ENCODE measurements at regions of chr20 and their contacts with region 1.

Region 1: GRCh38 chr20:38472513-38473372 is at the start of gene RALGAPB:
- DNase-seq: peak; percentile 96 to 100 (median 98)
- ATAC-seq: peak; percentile 95
- H3K4me3 ChIP-seq: peak within 1 kb of the TSS; percentile 84
- H3K4me3 Mint-ChIP-seq: peak within 1 kb of the TSS; percentile 89
- H3K27ac ChIP-seq: peak within 1 kb of the TSS; percentile 37 to 81
- H3K27ac Mint-ChIP-seq: peak within 1 kb of the TSS; percentile 88
- H3K4me1 ChIP-seq: peaks cover 27% of the 10 kb centered on the region
- H3K4me1 Mint-ChIP-seq: peaks cover 58% of the 10 kb centered on the region
- H3K27me3 ChIP-seq: peaks cover 0 to 3% of the 10 kb centered on the region in 2 experiments
- H3K27me3 Mint-ChIP-seq: no peaks in the 10 kb centered on the region
- CTCF ChIP-seq: peak; percentile 61
- total RNA-seq, gene RALGAPB: 30.4 to 31.9 TPM

Region 2: GRCh38 chr20:37178839-37179670 is 1293.7 kb before region 1 on chr20 and contains the starts of genes MROH8 and RPN2:
- CTCF ChIA-PET with region 1: no interaction called
- POLR2A ChIA-PET with region 1: no interaction called
- intact Hi-C with region 1: loop called in 1 of 2 experiments (anchors 5 kb)
- DNase-seq: peak; percentile 87 to 96 (median 93)
- ATAC-seq: peak; percentile 92
- H3K4me3 ChIP-seq: peak within 1 kb of the TSS; percentile 80
- H3K4me3 Mint-ChIP-seq: peak within 1 kb of the TSS; percentile 99
- H3K27ac ChIP-seq: peak within 1 kb of the TSS; percentile 84 to 90
- H3K27ac Mint-ChIP-seq: peak within 1 kb of the TSS; percentile 88
- H3K4me1 ChIP-seq: peaks cover 40% of the 10 kb centered on the region
- H3K4me1 Mint-ChIP-seq: peaks cover 46% of the 10 kb centered on the region
- H3K27me3 ChIP-seq: no peaks in the 10 kb centered on the region
- H3K27me3 Mint-ChIP-seq: no peaks in the 10 kb centered on the region
- CTCF ChIP-seq: no peak
- total RNA-seq, gene MROH8: 1.1 to 1.2 TPM
- total RNA-seq, gene RPN2: 62.8 to 65.8 TPM

Region 3: GRCh38 chr20:38033310-38034107 is 439.2 kb before region 1 on chr20 and contains the starts of genes RPRD1B and TTI1:
- CTCF ChIA-PET with region 1: no interaction called
- POLR2A ChIA-PET with region 1: interaction called, 4 read pairs
- intact Hi-C with region 1: loop called in 1 of 2 experiments (anchors 5 kb)
- DNase-seq: peak; percentile 74 to 94 (median 84)
- ATAC-seq: peak; percentile 84
- H3K4me3 ChIP-seq: peak within 1 kb of the TSS; percentile 79
- H3K4me3 Mint-ChIP-seq: peak within 1 kb of the TSS; percentile 99
- H3K27ac ChIP-seq: peak within 1 kb of the TSS; percentile 92 to 98
- H3K27ac Mint-ChIP-seq: peak within 1 kb of the TSS; percentile 100
- H3K4me1 ChIP-seq: peaks cover 38% of the 10 kb centered on the region
- H3K4me1 Mint-ChIP-seq: peaks cover 85% of the 10 kb centered on the region
- H3K27me3 ChIP-seq: no peaks in the 10 kb centered on the region
- H3K27me3 Mint-ChIP-seq: no peaks in the 10 kb centered on the region
- CTCF ChIP-seq: no peak
- total RNA-seq, gene RPRD1B: 54.8 to 55.7 TPM
- total RNA-seq, gene TTI1: 10.6 to 11.4 TPM

Region 4: GRCh38 chr20:38229376-38230252 is 243.1 kb before region 1 on chr20:
- CTCF ChIA-PET with region 1: no interaction called
- POLR2A ChIA-PET with region 1: no interaction called
- intact Hi-C with region 1: no loop called
- DNase-seq: no peak
- ATAC-seq: no peak
- H3K4me3 ChIP-seq: no peak overlapping the region
- H3K4me3 Mint-ChIP-seq: no peak overlapping the region
- H3K27ac ChIP-seq: no peak overlapping the region
- H3K27ac Mint-ChIP-seq: no peak overlapping the region
- H3K4me1 ChIP-seq: no peaks in the 10 kb centered on the region
- H3K4me1 Mint-ChIP-seq: no peaks in the 10 kb centered on the region
- H3K27me3 ChIP-seq: peaks cover 0 to 3% of the 10 kb centered on the region in 2 experiments
- H3K27me3 Mint-ChIP-seq: peaks cover 8% of the 10 kb centered on the region
- CTCF ChIP-seq: no peak

Region 5: DNA sequence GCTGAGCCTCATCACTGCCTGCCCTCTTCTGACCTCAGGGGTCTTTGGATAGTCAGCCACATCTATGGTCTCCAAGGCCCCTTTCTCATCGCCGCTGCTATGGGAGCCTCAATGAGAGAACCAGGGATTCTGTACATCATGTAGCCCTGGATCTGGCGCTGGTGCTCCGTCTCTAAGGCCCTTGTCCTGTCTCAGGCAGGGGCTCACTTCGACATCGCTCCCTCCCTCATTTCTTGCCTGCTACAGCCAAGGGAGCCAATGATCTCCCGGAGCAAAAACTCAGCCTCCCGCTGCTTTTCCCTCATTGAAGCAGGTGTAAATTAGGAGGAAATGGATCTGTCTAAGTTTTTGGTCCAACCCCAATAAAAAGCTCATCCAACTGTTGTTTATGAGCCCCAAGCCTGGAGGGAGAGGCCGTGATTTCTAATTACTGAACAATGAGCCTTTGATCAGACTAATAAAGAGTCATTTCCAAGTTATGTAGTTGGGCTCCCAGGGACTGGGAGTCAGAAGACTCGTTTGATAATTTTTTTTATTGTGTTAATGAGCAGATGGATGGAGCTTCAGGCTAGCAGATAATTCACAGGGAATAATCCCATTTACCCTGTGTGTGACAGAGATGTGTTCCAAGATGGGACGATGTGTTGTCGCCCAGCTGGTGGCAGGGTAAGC is 95.6 kb before region 1 on chr20:
- CTCF ChIA-PET with region 1: no interaction called
- POLR2A ChIA-PET with region 1: no interaction called
- intact Hi-C with region 1: no loop called
- DNase-seq: no peak
- ATAC-seq: no peak
- H3K4me3 ChIP-seq: no peak overlapping the region
- H3K4me3 Mint-ChIP-seq: no peak overlapping the region
- H3K27ac ChIP-seq: no peak overlapping the region
- H3K27ac Mint-ChIP-seq: no peak overlapping the region
- H3K4me1 ChIP-seq: no peaks in the 10 kb centered on the region
- H3K4me1 Mint-ChIP-seq: no peaks in the 10 kb centered on the region
- H3K27me3 ChIP-seq: peaks cover 2 to 3% of the 10 kb centered on the region in 2 experiments
- H3K27me3 Mint-ChIP-seq: peaks cover 16% of the 10 kb centered on the region
- CTCF ChIP-seq: no peak

Region 6: DNA sequence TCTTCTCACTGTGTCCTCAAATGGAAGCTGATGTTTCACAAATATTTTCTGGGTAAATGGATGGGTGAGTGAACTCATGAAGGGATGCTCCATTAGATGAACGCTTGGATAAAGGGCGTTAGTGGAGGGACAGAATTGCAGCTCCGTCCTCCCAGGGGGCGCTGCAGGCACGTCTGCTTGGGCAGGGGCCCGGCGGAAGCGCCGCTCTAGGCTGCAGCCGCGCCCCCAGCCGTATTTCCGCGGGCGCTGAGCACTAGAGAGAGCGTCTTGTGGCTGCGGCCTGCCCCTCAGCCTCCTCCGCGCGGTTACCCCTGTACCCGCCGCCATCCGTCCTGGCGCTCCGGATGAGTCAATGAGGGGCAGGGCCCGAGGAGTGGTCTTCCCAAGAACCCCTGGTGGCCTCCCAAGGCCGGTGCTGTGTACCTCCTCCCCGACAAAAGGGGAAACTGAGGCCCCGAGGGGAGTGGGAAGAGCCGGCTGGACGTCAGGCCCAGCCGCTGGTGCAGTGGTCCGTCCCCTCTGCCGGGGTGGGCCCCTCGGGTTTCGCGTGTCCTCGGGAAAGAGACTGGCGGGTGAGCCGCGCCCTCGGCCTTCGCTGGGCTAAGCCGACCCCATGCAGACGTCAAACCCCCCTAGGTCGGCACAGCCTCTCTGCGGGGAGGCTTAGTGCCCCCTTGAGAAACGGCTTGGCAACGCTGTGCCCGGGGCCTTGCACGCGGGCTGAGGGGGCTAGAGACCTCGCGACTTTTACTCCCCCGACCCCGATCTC is 26.1 kb before region 1 on chr20:
- CTCF ChIA-PET with region 1: interaction called, 32 read pairs
- POLR2A ChIA-PET with region 1: interaction called, 51 read pairs
- intact Hi-C with region 1: loop called (anchors 1 kb)
- DNase-seq: peak; percentile 87 to 96 (median 91)
- ATAC-seq: peak; percentile 98
- H3K4me3 ChIP-seq: peak overlapping the region; percentile 89
- H3K4me3 Mint-ChIP-seq: peak overlapping the region; percentile 85
- H3K27ac ChIP-seq: peak overlapping the region; percentile 38 to 75
- H3K27ac Mint-ChIP-seq: peak overlapping the region; percentile 64
- H3K4me1 ChIP-seq: peaks cover 22% of the 10 kb centered on the region
- H3K4me1 Mint-ChIP-seq: peaks cover 25% of the 10 kb centered on the region
- H3K27me3 ChIP-seq: no peaks in the 10 kb centered on the region
- H3K27me3 Mint-ChIP-seq: peaks cover 2% of the 10 kb centered on the region
- CTCF ChIP-seq: peak; percentile 100

Region 7: DNA sequence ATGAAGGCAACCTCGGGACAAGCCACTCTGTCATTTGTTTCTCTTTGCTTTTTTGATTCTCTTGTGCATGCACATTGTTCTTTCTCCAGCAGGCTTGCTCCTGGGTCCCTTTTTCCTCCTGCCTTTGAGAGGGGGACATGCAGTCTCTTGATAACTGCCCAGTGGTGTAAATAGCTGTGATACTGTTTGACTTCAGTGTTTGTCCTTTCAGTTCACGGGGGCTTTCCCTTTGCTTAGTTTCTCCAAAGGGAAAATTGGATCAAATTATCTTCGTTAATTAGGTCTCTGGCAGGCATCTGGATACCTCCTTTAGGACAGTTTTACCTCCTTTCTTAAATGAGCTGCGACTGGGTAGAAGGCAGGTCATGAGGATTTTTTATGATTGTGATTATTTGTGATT is 41.4 kb after region 1 on chr20:
- CTCF ChIA-PET with region 1: no interaction called
- POLR2A ChIA-PET with region 1: no interaction called
- intact Hi-C with region 1: no loop called
- DNase-seq: no peak
- ATAC-seq: no peak
- H3K4me3 ChIP-seq: no peak overlapping the region
- H3K4me3 Mint-ChIP-seq: no peak overlapping the region
- H3K27ac ChIP-seq: no peak overlapping the region
- H3K27ac Mint-ChIP-seq: no peak overlapping the region
- H3K4me1 ChIP-seq: no peaks in the 10 kb centered on the region
- H3K4me1 Mint-ChIP-seq: no peaks in the 10 kb centered on the region
- H3K27me3 ChIP-seq: no peaks in the 10 kb centered on the region
- H3K27me3 Mint-ChIP-seq: no peaks in the 10 kb centered on the region
- CTCF ChIP-seq: no peak

Measured in CD4-positive, alpha-beta T cell (primary cell).